CD4-positive, alpha-beta memory T cell (primary cell): ENCODE measurements at regions of chr10 and their contacts with region 1.

Region 1: DNA sequence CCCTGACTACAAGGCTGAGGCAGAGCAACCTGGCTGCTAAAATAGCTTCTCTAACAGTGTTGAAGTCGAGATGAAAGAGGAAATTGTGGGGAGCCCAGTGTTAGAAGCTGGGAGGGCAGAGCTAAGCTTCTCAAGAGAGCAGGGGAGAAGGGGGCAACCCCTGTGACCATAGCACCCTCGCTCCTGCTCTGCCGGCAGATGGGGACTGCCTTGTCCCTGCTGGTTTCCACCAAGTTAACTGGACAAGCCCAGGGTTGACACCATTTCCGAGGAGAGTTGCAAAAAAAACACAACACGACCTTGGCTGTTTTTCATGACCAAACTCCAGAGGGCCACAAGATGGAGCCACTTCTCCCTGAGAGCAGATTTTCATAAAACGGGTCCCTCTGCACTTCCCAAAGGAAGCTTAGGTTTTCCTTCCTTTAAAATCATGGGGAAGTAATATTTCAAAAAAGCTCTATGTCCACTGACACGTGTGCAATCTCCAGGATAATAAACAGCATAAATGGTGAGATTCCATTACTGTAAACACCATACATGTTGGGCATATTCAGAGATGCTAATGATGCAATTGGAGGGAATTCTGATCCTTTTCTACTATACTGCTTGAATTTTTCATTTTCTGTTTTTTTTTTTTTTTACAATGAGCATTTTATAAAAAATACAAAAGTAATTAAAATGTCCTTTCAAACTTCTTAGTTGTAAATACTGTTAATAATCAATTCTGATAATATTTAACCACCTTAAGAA is 140.4 kb downstream of the PIP4K2A start:
- DNase-seq: peak; percentile 17 to 40 (median 21)
- H3K4me3 ChIP-seq: no peak overlapping the region
- H3K4me3 Mint-ChIP-seq: peak overlapping the region in 3 of 8 donors; percentile 9 to 77 (median 31)
- H3K27ac ChIP-seq: no peak overlapping the region
- H3K27ac Mint-ChIP-seq: peak overlapping the region; percentile 27 to 78 (median 72)
- H3K4me1 ChIP-seq: peaks cover 37% of the 10 kb centered on the region
- H3K4me1 Mint-ChIP-seq: peaks cover 39 to 77% (median 58%) of the 10 kb centered on the region in 4 donors
- H3K27me3 ChIP-seq: no peaks in the 10 kb centered on the region
- H3K27me3 Mint-ChIP-seq: no peaks in the 10 kb centered on the region

Region 2: GRCh38 chr10:22846294-22846693 is 272.3 kb after region 1 on chr10:
- CTCF ChIA-PET with region 1: interaction called, 18 read pairs
- POLR2A ChIA-PET with region 1: no interaction called
- intact Hi-C with region 1: loop called (anchors 2 kb)
- DNase-seq: no peak
- H3K4me3 ChIP-seq: no peak overlapping the region
- H3K4me3 Mint-ChIP-seq: no peak overlapping the region
- H3K27ac ChIP-seq: no peak overlapping the region
- H3K27ac Mint-ChIP-seq: no peak overlapping the region
- H3K4me1 ChIP-seq: no peaks in the 10 kb centered on the region
- H3K4me1 Mint-ChIP-seq: peaks cover 5 to 9% (median 9%) of the 10 kb centered on the region in 4 donors
- H3K27me3 ChIP-seq: no peaks in the 10 kb centered on the region
- H3K27me3 Mint-ChIP-seq: peaks cover 2 to 3% of the 10 kb centered on the region in 2 donors

Region 3: GRCh38 chr10:23067939-23068775 is 494.2 kb after region 1 on chr10:
- CTCF ChIA-PET with region 1: no interaction called
- POLR2A ChIA-PET with region 1: no interaction called
- intact Hi-C with region 1: loop called (anchors 10 kb)
- DNase-seq: peak; percentile 43 to 51 (median 49)
- H3K4me3 ChIP-seq: no peak overlapping the region
- H3K4me3 Mint-ChIP-seq: peak overlapping the region in 1 of 8 donors; percentile 10
- H3K27ac ChIP-seq: no peak overlapping the region
- H3K27ac Mint-ChIP-seq: peak overlapping the region in 1 of 7 donors; percentile 41
- H3K4me1 ChIP-seq: no peaks in the 10 kb centered on the region
- H3K4me1 Mint-ChIP-seq: peaks cover 0 to 7% (median 1%) of the 10 kb centered on the region in 4 donors
- H3K27me3 ChIP-seq: no peaks in the 10 kb centered on the region
- H3K27me3 Mint-ChIP-seq: peaks cover 4 to 15% of the 10 kb centered on the region in 2 donors

Region 4: DNA sequence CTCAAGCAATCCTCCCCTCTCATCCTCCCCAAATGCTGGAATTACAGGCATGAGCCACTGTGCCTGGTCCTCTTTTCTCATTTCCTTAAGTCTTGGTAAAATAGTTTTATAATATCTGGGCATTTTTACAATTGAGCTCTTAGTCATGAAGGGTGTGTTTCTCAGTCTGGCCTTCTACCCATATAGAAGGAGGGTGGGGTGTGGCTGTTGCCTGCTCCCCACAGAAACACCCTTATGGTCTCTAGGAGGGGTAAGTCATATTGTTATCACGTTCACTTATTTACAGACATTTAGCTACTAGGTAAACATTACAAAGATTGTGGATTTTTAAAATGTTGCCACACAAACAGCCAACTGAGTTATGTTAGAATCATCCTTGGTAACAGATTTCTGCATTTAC is 858.2 kb after region 1 on chr10:
- CTCF ChIA-PET with region 1: no interaction called
- POLR2A ChIA-PET with region 1: no interaction called
- intact Hi-C with region 1: no loop called
- DNase-seq: no peak
- H3K4me3 ChIP-seq: no peak overlapping the region
- H3K4me3 Mint-ChIP-seq: no peak overlapping the region
- H3K27ac ChIP-seq: no peak overlapping the region
- H3K27ac Mint-ChIP-seq: no peak overlapping the region
- H3K4me1 ChIP-seq: no peaks in the 10 kb centered on the region
- H3K4me1 Mint-ChIP-seq: no peaks in the 10 kb centered on the region
- H3K27me3 ChIP-seq: no peaks in the 10 kb centered on the region
- H3K27me3 Mint-ChIP-seq: peaks cover 0 to 1% of the 10 kb centered on the region in 2 donors